Uterus (tissue), 4 donors: ENCODE measurements at regions of chr1 and their contacts with region 1.

Region 1: GRCh38 chr1:30525971-30526651 is 197.3 kb downstream of the MATN1 start:
- DNase-seq: peak; percentile 18 to 55
- H3K4me3 ChIP-seq: no peak overlapping the region
- H3K27ac ChIP-seq: no peak overlapping the region
- H3K4me1 ChIP-seq: no peaks in the 10 kb centered on the region
- H3K27me3 ChIP-seq: no peaks in the 10 kb centered on the region
- CTCF ChIP-seq: no peak
- POLR2A ChIP-seq: no peak

Region 2: GRCh38 chr1:30085811-30086770 is 440.0 kb before region 1 on chr1:
- intact Hi-C with region 1: no loop called
- DNase-seq: peak; percentile 51 to 64
- H3K4me3 ChIP-seq: no peak overlapping the region
- H3K27ac ChIP-seq: peak overlapping the region in 1 of 2 donors; percentile 42
- H3K4me1 ChIP-seq: no peaks in the 10 kb centered on the region
- H3K27me3 ChIP-seq: no peaks in the 10 kb centered on the region
- CTCF ChIP-seq: peak; percentile 51 to 82 (median 76)
- POLR2A ChIP-seq: no peak

Region 3: DNA sequence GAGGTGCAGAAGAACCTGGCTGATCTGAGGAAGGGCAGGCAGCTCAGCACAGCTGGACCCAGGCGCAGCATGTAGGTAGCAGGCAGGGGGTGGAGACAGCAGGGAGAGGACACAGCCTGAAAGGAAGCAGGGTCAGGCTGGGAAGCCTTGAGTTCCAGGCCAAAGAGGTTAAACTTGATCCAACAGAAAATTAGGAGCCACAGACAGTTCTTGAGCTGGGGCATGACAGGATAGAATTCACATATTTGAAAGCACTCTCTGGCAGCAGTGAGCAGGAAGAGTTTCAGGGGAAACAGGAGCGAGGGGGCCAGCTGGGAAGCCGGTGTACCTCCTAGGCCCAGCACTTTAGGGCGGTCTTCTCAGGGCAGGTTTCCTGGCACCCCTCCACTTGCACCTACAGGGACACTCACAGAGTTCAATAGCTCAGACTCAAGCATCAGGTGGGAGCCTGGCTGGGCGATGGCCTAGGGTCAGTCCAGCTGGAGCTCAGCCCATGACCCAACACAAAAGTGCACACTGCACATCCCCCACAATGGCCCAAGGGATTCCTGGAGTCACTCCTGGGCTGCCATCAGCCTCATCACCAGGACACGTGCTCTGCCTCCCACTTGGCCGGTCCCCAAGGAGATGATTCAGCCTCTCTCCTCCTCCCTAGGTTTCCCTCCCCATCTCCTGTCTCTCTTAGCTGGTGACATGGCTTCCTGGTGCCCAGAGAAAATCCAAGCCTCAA is 174.6 kb after region 1 on chr1:
- intact Hi-C with region 1: loop called (anchors 5 kb)
- DNase-seq: peak; percentile 78 to 96
- H3K4me3 ChIP-seq: no peak overlapping the region
- H3K27ac ChIP-seq: peak overlapping the region; percentile 89 to 90
- H3K4me1 ChIP-seq: peaks cover 21 to 37% of the 10 kb centered on the region in 2 donors
- H3K27me3 ChIP-seq: no peaks in the 10 kb centered on the region
- CTCF ChIP-seq: no peak
- POLR2A ChIP-seq: no peak